ENCODE measurements at regions of chr1 and their contacts with region 1.

Region 1: GRCh38 chr1:93846211-93846991 is 32.6 kb downstream of the DNTTIP2 start:
- DNase-seq: peak; percentile 80
- H3K4me3 Mint-ChIP-seq: peak overlapping the region; percentile 85
- H3K27ac Mint-ChIP-seq: peak overlapping the region; percentile 90
- H3K4me1 Mint-ChIP-seq: peaks cover 30% of the 10 kb centered on the region
- H3K27me3 Mint-ChIP-seq: peaks cover 2% of the 10 kb centered on the region

Region 2: GRCh38 chr1:92960395-92961130 is 885.8 kb before region 1 on chr1:
- intact Hi-C with region 1: loop called (anchors 5 kb)
- DNase-seq: peak; percentile 53
- H3K4me3 Mint-ChIP-seq: peak overlapping the region; percentile 90
- H3K27ac Mint-ChIP-seq: peak overlapping the region; percentile 97
- H3K4me1 Mint-ChIP-seq: peaks cover 41% of the 10 kb centered on the region
- H3K27me3 Mint-ChIP-seq: no peaks in the 10 kb centered on the region

Region 3: DNA sequence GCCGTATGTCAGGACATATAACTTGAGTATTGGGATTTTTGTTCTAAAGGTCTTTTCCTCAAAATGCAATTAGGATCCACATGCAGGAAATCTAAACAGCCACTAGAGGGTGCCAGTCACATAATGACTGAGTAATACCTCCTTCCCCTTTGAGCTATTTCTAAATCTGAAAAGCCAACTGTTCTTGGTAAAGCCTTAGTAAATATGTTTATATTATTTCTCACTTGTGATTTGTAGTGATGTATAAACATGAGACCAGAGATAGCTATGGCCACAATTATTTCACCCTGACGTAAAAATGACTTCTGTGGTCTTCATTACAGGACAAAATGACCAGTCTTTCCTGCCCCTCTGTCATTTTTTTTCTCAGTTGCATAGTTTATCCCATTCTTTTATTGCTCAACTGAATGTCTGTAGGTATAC is 541.7 kb before region 1 on chr1:
- intact Hi-C with region 1: loop called (anchors 1 kb)
- DNase-seq: peak; percentile 25
- H3K4me3 Mint-ChIP-seq: no peak overlapping the region
- H3K27ac Mint-ChIP-seq: no peak overlapping the region
- H3K4me1 Mint-ChIP-seq: peaks cover 5% of the 10 kb centered on the region
- H3K27me3 Mint-ChIP-seq: no peaks in the 10 kb centered on the region

Region 4: DNA sequence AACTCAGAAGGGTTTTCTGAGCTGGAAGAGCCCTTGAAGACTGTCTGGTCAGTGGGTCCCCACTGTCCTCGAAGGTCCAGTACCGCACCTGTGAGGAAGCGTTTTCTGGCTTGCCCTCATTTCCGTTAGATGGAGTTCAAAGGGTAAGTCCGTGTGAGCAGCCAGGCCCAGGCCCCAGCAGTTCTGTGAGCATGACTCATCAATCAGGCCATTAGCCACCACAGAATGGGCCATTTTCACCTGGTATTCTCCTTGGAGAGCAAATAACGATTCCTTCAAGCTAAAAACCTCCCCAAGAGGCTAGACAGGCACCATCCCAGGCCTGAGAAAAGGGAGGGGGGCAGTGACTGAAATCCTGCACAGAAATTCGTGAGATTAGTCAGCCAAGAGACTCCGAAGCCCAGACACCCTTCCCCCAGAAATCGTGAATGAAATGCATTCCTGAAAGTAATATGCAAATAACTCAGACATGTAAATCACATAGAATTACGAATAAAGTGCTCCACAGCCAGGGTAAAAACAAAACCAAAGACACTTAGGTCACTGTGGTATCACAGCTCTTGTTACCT is 230.7 kb before region 1 on chr1:
- intact Hi-C with region 1: loop called (anchors 1 kb)
- DNase-seq: no peak
- H3K4me3 Mint-ChIP-seq: peak overlapping the region; percentile 25
- H3K27ac Mint-ChIP-seq: peak overlapping the region; percentile 72
- H3K4me1 Mint-ChIP-seq: peaks cover 22% of the 10 kb centered on the region
- H3K27me3 Mint-ChIP-seq: peaks cover 39% of the 10 kb centered on the region

Region 5: DNA sequence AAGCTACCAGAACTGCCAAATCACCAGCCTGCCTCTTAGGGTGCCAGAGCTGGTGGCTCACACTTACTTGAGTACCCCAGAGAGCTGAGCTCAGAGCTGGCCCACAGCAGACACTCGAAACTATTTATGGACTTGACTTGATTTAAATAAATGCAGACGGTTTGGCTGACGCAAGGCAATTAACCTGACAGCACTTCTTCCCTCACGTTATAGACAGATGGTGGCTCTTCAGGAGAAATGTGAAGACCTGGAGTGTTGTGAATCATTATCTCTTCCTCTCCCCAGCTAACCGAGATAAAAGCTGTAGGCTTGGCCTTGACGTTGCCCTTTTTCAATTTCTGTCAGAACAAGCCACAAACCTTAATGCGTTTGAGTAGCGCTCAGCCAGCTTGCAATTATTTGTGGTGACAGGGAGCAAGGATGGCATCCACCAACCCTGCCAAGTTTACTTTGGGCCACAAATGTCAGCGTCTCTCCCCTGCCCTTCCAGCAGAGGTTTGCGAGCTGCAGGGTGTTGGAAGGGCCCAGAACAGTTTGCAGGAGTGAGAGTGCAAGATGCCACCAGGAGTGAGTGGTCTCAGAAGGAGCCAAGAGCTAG is 130.8 kb before region 1 on chr1:
- intact Hi-C with region 1: loop called (anchors 5 kb)
- DNase-seq: no peak
- H3K4me3 Mint-ChIP-seq: no peak overlapping the region
- H3K27ac Mint-ChIP-seq: peak overlapping the region; percentile 56
- H3K4me1 Mint-ChIP-seq: peaks cover 41% of the 10 kb centered on the region
- H3K27me3 Mint-ChIP-seq: peaks cover 6% of the 10 kb centered on the region

Region 6: GRCh38 chr1:93909146-93910050 is 63.0 kb after region 1 on chr1 and contains the start of gene GCLM:
- intact Hi-C with region 1: loop called (anchors 1 kb)
- DNase-seq: peak; percentile 89
- H3K4me3 Mint-ChIP-seq: peak within 1 kb of the TSS; percentile 94
- H3K27ac Mint-ChIP-seq: peak within 1 kb of the TSS; percentile 94
- H3K4me1 Mint-ChIP-seq: peaks cover 40% of the 10 kb centered on the region
- H3K27me3 Mint-ChIP-seq: peaks cover 20% of the 10 kb centered on the region
- total RNA-seq, gene GCLM: 20.2 and 23.8 TPM in 2 replicates

Measured in activated T-helper 1 cell treated with anti-CD3 and anti-CD28 coated beads, Interleukin-12 subunit alpha, Interleukin-12 subunit beta, Interleukin-2, Interleukin-4 antibody, amounts not matched to agents 30 ng/mL and 10 ng/mL and 1 ng/mL, durations not matched to agents 14 hours and 24 hours and 36 hours (primary cell).